Activated B cell treated with CpG ODN at 0.5 μM for 24 hours (primary cell): ENCODE measurements at regions of chr19 and their contacts with region 1.

Region 1: GRCh38 chr19:56594783-56595547 is at the start of gene ZNF71:
- DNase-seq: peak; percentile 87
- ATAC-seq: peak; percentile 95
- H3K4me3 Mint-ChIP-seq: peak within 1 kb of the TSS; percentile 96
- H3K27ac Mint-ChIP-seq: peak within 1 kb of the TSS; percentile 82
- H3K4me1 Mint-ChIP-seq: peaks cover 13% of the 10 kb centered on the region
- H3K27me3 Mint-ChIP-seq: no peaks in the 10 kb centered on the region
- CTCF ChIP-seq: no peak
- total RNA-seq, gene ZNF71: 6.3 and 6.7 TPM in 2 replicates

Region 2: DNA sequence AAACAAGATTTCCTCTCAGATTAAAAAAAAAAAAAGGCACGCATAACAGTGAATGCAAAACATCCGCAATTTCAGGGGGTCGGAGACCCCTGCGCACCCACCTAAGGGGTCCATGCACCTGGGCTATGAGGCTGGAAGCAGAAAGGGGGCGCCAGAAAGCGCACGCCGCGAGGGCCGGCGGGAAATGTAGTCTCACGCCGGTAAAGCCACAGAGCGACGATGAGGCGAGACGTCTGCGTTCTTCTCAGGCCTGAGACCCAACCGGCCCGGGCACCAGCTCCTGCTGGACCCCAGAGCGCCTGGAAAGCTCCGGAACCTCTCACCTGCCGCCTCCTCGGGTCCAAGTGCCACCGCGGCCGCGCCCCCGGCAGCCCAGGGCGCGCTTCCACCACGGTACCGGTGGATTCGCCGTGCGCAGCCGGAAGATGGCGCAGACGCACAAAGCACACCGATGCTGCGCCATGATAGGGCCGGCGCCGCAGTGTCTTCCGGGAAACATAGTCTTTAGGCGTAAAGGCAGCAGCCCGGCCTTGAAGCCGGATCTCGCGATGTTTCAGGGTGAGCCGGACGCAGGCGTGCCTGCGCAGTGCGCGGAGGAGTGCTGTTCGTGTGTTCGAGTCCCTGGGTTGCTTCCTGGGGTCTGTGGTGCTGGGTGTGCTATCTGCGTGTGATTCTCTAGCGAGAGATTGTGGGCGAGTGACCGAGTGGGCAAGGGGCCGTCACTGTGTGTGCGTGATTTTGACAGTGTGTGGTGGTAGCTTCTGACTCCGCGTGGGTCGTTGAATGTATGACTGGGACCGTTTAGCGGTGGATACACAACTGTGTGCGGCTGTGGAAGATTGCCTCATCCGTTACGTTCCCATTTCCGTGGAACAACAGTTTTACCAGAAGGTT is 201.6 kb before region 1 on chr19 and contains the start of gene ZNF582:
- CTCF ChIA-PET with region 1: no interaction called
- POLR2A ChIA-PET with region 1: interaction called, 3 read pairs
- intact Hi-C with region 1: loop called (anchors 2 kb)
- DNase-seq: peak; percentile 85
- ATAC-seq: peak; percentile 96
- H3K4me3 Mint-ChIP-seq: peak within 1 kb of the TSS; percentile 97
- H3K27ac Mint-ChIP-seq: peak within 1 kb of the TSS; percentile 96
- H3K4me1 Mint-ChIP-seq: peaks cover 13% of the 10 kb centered on the region
- H3K27me3 Mint-ChIP-seq: no peaks in the 10 kb centered on the region
- CTCF ChIP-seq: no peak
- total RNA-seq, gene ZNF582: 7.4 and 7.9 TPM in 2 replicates

Region 3: DNA sequence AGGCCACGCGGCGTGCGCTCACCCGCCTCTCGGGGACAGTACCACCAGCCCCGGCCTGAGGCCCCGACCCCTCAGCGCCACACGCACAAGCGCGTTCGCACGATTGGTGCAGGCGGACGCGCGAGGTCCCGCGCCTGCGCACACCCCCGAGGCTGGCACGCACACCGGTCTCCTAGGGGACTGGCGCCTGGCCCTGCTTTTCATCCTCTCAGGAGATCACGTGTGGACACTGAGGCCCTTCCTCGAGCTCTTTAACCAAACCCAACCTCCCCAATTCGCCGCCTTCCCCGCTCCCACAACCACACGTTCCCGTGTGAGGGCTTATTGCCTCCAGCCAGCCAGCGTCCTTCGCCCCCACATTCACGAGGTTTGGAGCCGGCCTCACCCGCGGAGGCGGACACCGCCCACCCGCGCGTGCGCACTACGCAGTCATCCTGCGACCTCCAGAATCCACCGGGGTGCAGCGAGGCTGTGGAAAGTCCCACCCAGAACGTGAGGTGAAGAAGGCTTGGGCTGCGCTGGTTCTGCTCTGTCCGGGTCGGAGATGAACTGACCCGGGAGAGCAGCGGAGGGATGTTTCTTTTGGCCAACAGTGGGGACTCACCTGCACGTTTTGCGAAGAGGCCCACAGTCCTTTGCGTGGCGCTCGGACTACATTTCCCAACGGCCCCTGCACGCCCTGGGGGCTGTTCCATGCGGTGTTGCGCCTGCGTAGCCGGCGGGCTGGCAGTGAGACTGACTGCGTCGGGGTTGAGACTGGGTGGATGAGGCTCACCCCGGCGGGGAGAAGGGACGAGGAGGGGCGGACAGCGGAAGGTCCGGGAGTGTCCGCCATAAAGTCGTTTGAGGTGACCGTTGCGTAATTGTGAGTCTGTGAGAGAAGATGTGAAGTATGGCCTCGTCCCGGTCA is 117.3 kb before region 1 on chr19:
- CTCF ChIA-PET with region 1: no interaction called
- POLR2A ChIA-PET with region 1: interaction called, 4 read pairs
- intact Hi-C with region 1: loop called (anchors 1 kb)
- DNase-seq: peak; percentile 73
- ATAC-seq: peak; percentile 80
- H3K4me3 Mint-ChIP-seq: peak overlapping the region; percentile 96
- H3K27ac Mint-ChIP-seq: peak overlapping the region; percentile 96
- H3K4me1 Mint-ChIP-seq: peaks cover 19% of the 10 kb centered on the region
- H3K27me3 Mint-ChIP-seq: peaks cover 8% of the 10 kb centered on the region
- CTCF ChIP-seq: no peak

Region 4: GRCh38 chr19:56567274-56568120 is 27.5 kb before region 1 on chr19 and contains the start of gene ZNF470:
- CTCF ChIA-PET with region 1: no interaction called
- POLR2A ChIA-PET with region 1: no interaction called
- intact Hi-C with region 1: loop called (anchors 1 kb)
- DNase-seq: peak; percentile 86
- ATAC-seq: peak; percentile 98
- H3K4me3 Mint-ChIP-seq: peak within 1 kb of the TSS; percentile 96
- H3K27ac Mint-ChIP-seq: peak within 1 kb of the TSS; percentile 88
- H3K4me1 Mint-ChIP-seq: peaks cover 15% of the 10 kb centered on the region
- H3K27me3 Mint-ChIP-seq: no peaks in the 10 kb centered on the region
- CTCF ChIP-seq: no peak
- total RNA-seq, gene ZNF470: 5.9 and 6.4 TPM in 2 replicates

Region 5: GRCh38 chr19:56678205-56678604 is 83.2 kb after region 1 on chr19:
- CTCF ChIA-PET with region 1: no interaction called
- POLR2A ChIA-PET with region 1: interaction called, 17 read pairs
- intact Hi-C with region 1: no loop called
- DNase-seq: no peak
- ATAC-seq: no peak
- H3K4me3 Mint-ChIP-seq: no peak overlapping the region
- H3K27ac Mint-ChIP-seq: no peak overlapping the region
- H3K4me1 Mint-ChIP-seq: no peaks in the 10 kb centered on the region
- H3K27me3 Mint-ChIP-seq: no peaks in the 10 kb centered on the region
- CTCF ChIP-seq: no peak

Region 6: DNA sequence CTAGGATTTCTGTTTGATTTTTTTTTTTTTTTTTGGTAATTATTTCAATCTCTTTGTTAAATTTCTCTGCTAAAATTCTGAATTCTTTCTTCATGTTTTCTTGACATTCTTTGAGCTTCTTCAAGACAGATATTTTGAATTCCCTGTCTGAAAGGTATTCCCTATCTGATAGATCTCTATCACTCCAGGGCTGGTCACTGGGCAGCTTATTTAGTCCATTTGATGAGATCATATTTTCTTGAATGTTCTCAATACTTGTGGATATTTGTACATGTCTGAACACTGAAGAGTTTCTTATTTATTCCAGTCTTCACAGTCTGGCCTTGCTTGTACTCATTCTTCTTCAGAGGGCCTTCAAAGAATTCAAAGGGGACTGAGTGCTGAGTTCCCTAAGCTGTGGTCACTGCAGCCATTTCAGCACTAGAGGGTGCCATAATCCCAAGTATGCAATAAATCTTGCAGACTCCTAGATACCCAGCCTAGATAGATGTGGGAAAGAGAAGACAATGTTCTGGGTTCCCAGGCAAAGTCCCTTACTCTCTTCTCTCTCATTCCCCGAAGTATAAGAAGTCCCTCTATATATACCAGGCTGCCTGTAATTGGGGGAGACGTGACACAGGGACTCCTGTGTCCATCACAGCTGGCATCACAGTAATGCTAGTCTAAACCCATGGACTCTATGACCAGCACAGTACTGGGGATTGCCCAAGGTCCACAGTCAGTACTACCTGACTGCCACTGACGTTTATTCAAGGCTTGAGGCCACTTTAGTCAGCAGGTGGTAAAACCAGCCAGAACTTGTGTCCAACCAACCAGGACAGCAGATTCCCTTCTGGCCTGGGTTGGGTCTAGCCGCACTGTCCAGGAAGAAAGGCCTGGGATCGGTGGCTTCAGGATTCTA is 870.8 kb after region 1 on chr19:
- CTCF ChIA-PET with region 1: no interaction called
- POLR2A ChIA-PET with region 1: no interaction called
- intact Hi-C with region 1: no loop called
- DNase-seq: no peak
- ATAC-seq: no peak
- H3K4me3 Mint-ChIP-seq: no peak overlapping the region
- H3K27ac Mint-ChIP-seq: no peak overlapping the region
- H3K4me1 Mint-ChIP-seq: no peaks in the 10 kb centered on the region
- H3K27me3 Mint-ChIP-seq: no peaks in the 10 kb centered on the region
- CTCF ChIP-seq: no peak